Activated B cell treated with CpG ODN at 0.5 μM for 24 hours (primary cell): ENCODE measurements at regions of chr11 and their contacts with region 1.

Region 1: GRCh38 chr11:83063073-83063754 is 8.5 kb downstream of the RAB30 start:
- DNase-seq: no peak
- ATAC-seq: peak; percentile 72
- H3K4me3 Mint-ChIP-seq: peak overlapping the region; percentile 87
- H3K27ac Mint-ChIP-seq: no peak overlapping the region
- H3K4me1 Mint-ChIP-seq: peaks cover 94% of the 10 kb centered on the region
- H3K27me3 Mint-ChIP-seq: no peaks in the 10 kb centered on the region
- CTCF ChIP-seq: no peak

Region 2: DNA sequence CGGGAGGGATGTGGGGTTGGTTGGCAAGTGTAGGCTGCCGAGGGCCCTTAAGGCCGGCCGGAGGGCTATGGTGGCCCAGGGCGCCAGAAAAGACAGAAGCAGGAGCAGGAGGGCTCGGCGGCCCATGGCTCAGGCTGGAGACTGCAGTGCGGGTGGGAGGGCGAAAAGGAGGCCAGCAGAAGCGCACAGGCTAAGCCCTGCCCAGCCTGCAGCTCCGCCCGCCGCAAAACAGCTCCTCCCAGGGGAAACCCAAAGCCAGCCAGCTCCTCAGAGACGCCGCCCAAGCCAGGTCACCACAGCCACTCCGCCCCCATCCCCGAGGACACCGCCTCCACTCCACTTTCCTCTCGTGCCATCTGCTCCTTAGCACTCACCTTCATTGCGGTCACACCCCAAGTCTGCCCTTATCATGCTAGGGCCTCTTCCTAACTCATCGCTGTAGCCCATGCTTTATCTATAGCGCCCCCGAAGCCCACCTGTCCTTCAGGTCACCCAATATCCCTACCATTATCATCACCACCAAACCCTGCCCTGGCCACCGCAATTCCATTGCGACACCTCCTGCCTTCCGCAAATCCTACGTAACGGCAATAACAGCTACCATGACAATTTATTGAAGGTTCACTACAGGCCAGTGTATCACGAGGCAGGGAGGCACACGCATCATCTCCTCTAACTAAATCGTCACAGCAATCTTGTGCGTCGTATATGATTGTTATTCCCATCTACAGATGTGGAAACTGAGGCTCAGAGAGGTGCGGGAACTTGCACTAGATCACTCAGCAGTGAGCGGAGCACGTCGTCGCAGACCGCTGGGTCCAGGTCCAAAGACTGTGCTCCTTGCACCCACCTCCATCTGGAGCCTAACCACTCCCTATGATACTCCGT is 162.7 kb before region 1 on chr11 and contains the start of gene PRCP:
- CTCF ChIA-PET with region 1: interaction called, 3 read pairs
- POLR2A ChIA-PET with region 1: interaction called, 34 read pairs
- intact Hi-C with region 1: loop called (anchors 1 kb)
- DNase-seq: peak; percentile 78
- ATAC-seq: peak; percentile 75
- H3K4me3 Mint-ChIP-seq: peak within 1 kb of the TSS; percentile 100
- H3K27ac Mint-ChIP-seq: peak within 1 kb of the TSS; percentile 99
- H3K4me1 Mint-ChIP-seq: peaks cover 57% of the 10 kb centered on the region
- H3K27me3 Mint-ChIP-seq: no peaks in the 10 kb centered on the region
- CTCF ChIP-seq: no peak
- total RNA-seq, gene PRCP: 29.8 and 34.8 TPM in 2 replicates

Region 3: DNA sequence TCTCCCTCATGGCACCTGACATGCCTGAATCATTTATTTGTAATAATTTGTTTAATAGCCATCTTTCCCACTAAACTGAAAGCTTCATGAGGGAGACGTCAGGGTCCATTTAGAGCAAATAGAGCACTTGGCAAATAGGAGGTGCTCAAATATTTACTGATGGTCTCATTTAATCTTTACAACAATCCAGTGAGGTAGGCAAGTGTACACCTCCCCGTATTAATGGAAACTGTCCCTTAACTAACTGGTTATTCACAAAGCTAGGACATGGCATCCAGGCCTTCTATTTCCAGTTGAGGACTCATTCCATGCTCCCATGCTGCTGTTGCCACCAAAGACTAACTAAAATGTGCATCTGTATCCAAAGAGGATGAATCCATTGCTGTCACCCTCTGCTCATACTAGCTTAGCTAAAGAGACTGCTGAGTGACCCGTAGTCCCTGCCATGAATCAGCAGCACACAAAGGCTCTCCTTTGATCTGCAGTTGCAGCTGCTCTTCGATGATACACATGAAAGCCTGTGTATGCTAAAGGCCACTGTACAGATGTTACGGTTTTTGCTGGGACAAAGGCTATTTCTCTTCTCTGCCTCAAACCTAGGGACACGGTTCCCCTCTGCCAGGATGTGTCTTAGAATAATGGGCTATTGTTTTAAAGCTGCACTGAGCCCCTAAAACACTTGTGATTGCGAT is 74.1 kb before region 1 on chr11:
- CTCF ChIA-PET with region 1: interaction called, 3 read pairs
- POLR2A ChIA-PET with region 1: interaction called, 10 read pairs
- intact Hi-C with region 1: no loop called
- DNase-seq: no peak
- ATAC-seq: no peak
- H3K4me3 Mint-ChIP-seq: no peak overlapping the region
- H3K27ac Mint-ChIP-seq: peak overlapping the region; percentile 66
- H3K4me1 Mint-ChIP-seq: peaks cover 42% of the 10 kb centered on the region
- H3K27me3 Mint-ChIP-seq: no peaks in the 10 kb centered on the region
- CTCF ChIP-seq: no peak

Region 4: DNA sequence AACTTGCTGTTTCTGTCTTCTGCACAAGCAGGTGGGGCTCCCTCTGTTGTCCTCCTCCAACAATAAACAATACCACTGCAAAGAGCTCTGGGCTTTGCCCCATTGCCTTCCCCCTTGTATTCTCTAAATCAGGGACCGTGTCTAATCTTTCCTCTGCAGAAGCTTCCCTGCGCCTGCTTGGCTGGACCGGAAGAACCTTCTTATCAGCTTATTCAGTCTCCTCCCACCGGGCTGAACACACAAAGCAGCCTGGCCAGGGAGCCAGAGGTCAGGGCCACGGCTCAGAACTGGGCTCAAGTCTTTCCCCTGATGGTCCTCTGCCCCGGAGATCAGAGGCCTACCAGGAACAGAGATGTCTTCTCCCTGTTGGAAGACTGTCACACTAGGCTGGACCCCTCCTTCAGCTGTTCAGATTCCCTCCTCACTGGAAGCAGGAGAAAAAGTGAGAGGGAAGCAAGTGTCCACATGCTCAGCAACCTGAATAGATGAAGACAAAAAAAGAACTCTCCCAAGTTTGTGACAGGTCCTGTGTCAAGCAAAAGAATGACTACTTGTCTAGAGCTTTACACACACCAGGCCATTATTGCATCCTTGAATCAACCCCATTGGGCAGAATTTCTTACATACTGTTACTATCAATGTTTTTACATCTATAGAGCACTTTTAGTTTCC is 55.2 kb before region 1 on chr11:
- CTCF ChIA-PET with region 1: no interaction called
- POLR2A ChIA-PET with region 1: interaction called, 20 read pairs
- intact Hi-C with region 1: no loop called
- DNase-seq: no peak
- ATAC-seq: peak; percentile 28
- H3K4me3 Mint-ChIP-seq: peak overlapping the region; percentile 36
- H3K27ac Mint-ChIP-seq: peak overlapping the region; percentile 82
- H3K4me1 Mint-ChIP-seq: peaks cover 77% of the 10 kb centered on the region
- H3K27me3 Mint-ChIP-seq: no peaks in the 10 kb centered on the region
- CTCF ChIP-seq: no peak

Region 5: GRCh38 chr11:83044958-83045712 is 18.1 kb before region 1 on chr11:
- CTCF ChIA-PET with region 1: no interaction called
- POLR2A ChIA-PET with region 1: interaction called, 42 read pairs
- intact Hi-C with region 1: loop called (anchors 1 kb)
- DNase-seq: no peak
- ATAC-seq: peak; percentile 64
- H3K4me3 Mint-ChIP-seq: peak overlapping the region; percentile 13
- H3K27ac Mint-ChIP-seq: peak overlapping the region; percentile 64
- H3K4me1 Mint-ChIP-seq: peaks cover 86% of the 10 kb centered on the region
- H3K27me3 Mint-ChIP-seq: no peaks in the 10 kb centered on the region
- CTCF ChIP-seq: no peak

Region 6: DNA sequence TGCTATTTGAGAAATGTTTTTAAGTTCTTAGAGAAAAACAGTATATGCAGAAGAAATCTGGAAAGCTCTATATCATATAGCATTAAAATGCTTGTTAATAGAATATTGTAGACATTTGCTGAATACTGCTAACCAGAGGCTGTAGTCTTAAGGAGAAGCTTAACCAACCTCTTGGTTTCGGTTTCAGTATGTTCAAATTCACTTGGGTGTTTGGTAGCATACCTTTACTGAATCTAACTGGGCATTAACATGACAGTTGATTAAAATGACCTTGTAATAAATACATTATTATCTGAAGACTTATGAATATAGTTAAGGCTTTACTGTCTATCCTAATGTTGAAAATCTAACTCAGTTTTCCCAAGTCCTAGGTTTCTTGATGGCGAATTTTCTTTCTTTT is 99.2 kb after region 1 on chr11:
- CTCF ChIA-PET with region 1: no interaction called
- POLR2A ChIA-PET with region 1: interaction called, 119 read pairs
- intact Hi-C with region 1: no loop called
- DNase-seq: no peak
- ATAC-seq: peak; percentile 41
- H3K4me3 Mint-ChIP-seq: peak overlapping the region; percentile 64
- H3K27ac Mint-ChIP-seq: peak overlapping the region; percentile 56
- H3K4me1 Mint-ChIP-seq: peaks cover 61% of the 10 kb centered on the region
- H3K27me3 Mint-ChIP-seq: no peaks in the 10 kb centered on the region
- CTCF ChIP-seq: no peak

Region 7: GRCh38 chr11:83285771-83286528 is 222.7 kb after region 1 on chr11 and contains the start of gene CCDC90B:
- CTCF ChIA-PET with region 1: no interaction called
- POLR2A ChIA-PET with region 1: interaction called, 6 read pairs
- intact Hi-C with region 1: loop called (anchors 2 kb)
- DNase-seq: peak; percentile 86
- ATAC-seq: peak; percentile 88
- H3K4me3 Mint-ChIP-seq: peak within 1 kb of the TSS; percentile 99
- H3K27ac Mint-ChIP-seq: peak within 1 kb of the TSS; percentile 100
- H3K4me1 Mint-ChIP-seq: peaks cover 61% of the 10 kb centered on the region
- H3K27me3 Mint-ChIP-seq: no peaks in the 10 kb centered on the region
- CTCF ChIP-seq: no peak
- total RNA-seq, gene CCDC90B: 25.8 and 29.2 TPM in 2 replicates